ENCODE measurements at regions of chr2 and their contacts with region 1.

Region 1: GRCh38 chr2:199488772-199489400 is 31.1 kb upstream of the SATB2 start:
- DNase-seq: peak; percentile 60
- ATAC-seq: peak; percentile 72
- H3K4me3 ChIP-seq: no peak overlapping the region
- H3K27ac ChIP-seq: no peak overlapping the region
- H3K4me1 ChIP-seq: no peaks in the 10 kb centered on the region; a peak in 1 of 4 replicates
- H3K27me3 ChIP-seq: no peaks in the 10 kb centered on the region
- CTCF ChIP-seq: peak; percentile 68 to 89 (median 89); a peak in 5 of 6 replicates
- POLR2A ChIP-seq: no peak
- RAD21 ChIP-seq: peak; percentile 71

Region 2: DNA sequence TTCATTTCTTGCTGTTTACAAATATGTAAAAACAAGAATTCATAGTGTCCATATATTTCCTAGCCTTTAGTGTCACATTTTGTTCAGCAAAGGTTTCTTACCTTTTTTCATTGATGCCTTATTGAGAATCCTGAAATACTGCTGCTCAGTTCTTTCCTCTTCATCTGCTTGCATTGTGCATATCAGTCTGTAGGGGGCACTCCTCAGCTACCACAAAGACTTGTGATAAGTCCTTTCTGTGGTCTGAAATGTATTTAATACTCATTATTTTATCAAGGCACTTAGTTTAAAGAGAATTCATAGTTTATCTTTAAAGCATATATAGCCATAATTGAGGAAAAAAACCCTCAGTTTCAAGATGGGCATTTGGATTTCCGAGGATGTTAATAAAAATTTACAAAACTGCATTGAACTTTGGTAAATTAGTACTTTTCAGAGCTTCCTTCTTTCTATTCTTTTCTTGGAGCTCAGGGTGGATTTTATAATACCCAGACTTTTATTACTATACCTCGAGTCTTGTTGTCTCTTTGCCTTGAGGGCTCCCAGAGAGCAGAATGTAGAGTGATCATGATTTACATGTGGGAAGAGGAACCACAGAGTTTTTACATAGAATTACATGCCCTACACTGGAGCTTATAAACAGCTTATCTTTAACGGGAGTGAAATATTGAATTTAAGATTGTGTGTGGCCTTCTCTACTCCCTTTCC is 1114.4 kb before region 1 on chr2:
- CTCF ChIA-PET with region 1: interaction called, 9 read pairs
- POLR2A ChIA-PET with region 1: no interaction called
- RAD21 ChIA-PET with region 1: no interaction called
- intact Hi-C with region 1: loop called (anchors 1 kb)
- DNase-seq: no peak
- ATAC-seq: peak; percentile 81
- H3K4me3 ChIP-seq: no peak overlapping the region
- H3K27ac ChIP-seq: no peak overlapping the region
- H3K4me1 ChIP-seq: peaks cover 0 to 8% of the 10 kb centered on the region in 2 experiments; a peak in 1 of 4 replicates
- H3K27me3 ChIP-seq: peaks cover 6% of the 10 kb centered on the region; the same call in 1 of the 2 replicates
- CTCF ChIP-seq: peak; percentile 48 to 93 (median 84); a peak in 5 of 6 replicates
- POLR2A ChIP-seq: no peak
- RAD21 ChIP-seq: peak; percentile 74

Region 3: GRCh38 chr2:198657512-198658121 is 831.3 kb before region 1 on chr2:
- CTCF ChIA-PET with region 1: interaction called, 36 read pairs
- POLR2A ChIA-PET with region 1: no interaction called
- RAD21 ChIA-PET with region 1: no interaction called
- intact Hi-C with region 1: loop called (anchors 1 kb)
- DNase-seq: peak; percentile 28
- ATAC-seq: peak; percentile 53
- H3K4me3 ChIP-seq: no peak overlapping the region
- H3K27ac ChIP-seq: no peak overlapping the region
- H3K4me1 ChIP-seq: no peaks in the 10 kb centered on the region
- H3K27me3 ChIP-seq: no peaks in the 10 kb centered on the region
- CTCF ChIP-seq: peak; percentile 32 to 64 (median 53); a peak in 5 of 6 replicates
- POLR2A ChIP-seq: no peak
- RAD21 ChIP-seq: peak; percentile 56

Region 4: DNA sequence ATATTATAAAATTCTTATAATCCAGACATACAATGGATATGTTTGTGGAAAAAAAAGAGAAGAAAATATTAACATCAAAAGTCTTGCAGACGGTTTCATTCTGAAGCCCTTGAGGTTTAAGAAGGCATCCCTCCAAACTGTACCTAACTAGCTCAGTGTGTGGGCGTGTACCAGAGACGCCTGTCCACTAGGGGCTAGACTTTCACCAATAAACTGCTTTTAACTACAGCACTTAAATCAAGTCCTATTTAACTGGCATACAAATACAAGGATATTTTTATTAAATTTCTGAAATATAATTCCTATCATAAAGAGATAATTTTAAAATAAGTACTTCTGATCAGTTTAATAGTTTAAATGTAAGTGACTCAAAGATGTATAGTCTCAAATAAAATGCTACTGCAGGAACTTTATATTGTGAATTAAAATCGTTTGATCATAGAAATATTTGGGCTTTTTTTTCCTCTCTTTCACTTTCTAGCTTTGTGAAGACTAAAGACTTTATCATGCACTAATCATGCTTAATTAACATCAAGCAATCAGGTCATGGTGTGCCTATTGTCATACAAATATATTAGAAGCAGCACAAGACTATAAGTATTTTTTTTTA is 468.9 kb before region 1 on chr2:
- CTCF ChIA-PET with region 1: no interaction called
- POLR2A ChIA-PET with region 1: no interaction called
- RAD21 ChIA-PET with region 1: interaction called in 1 of 2 experiments, 3 read pairs
- intact Hi-C with region 1: loop called (anchors 2 kb)
- DNase-seq: peak; percentile 21
- ATAC-seq: peak; percentile 84
- H3K4me3 ChIP-seq: no peak overlapping the region
- H3K27ac ChIP-seq: no peak overlapping the region
- H3K4me1 ChIP-seq: no peaks in the 10 kb centered on the region
- H3K27me3 ChIP-seq: no peaks in the 10 kb centered on the region
- CTCF ChIP-seq: peak; percentile 30 to 65 (median 49); a peak in 5 of 6 replicates
- POLR2A ChIP-seq: no peak
- RAD21 ChIP-seq: peak; percentile 54

Region 5: GRCh38 chr2:199405241-199405640 is 83.6 kb before region 1 on chr2:
- CTCF ChIA-PET with region 1: interaction called, 3 read pairs
- POLR2A ChIA-PET with region 1: no interaction called
- RAD21 ChIA-PET with region 1: no interaction called
- intact Hi-C with region 1: loop called (anchors 1 kb)
- DNase-seq: peak; percentile 27
- ATAC-seq: peak; percentile 88
- H3K4me3 ChIP-seq: no peak overlapping the region
- H3K27ac ChIP-seq: no peak overlapping the region
- H3K4me1 ChIP-seq: peaks cover 4 to 11% of the 10 kb centered on the region in 2 experiments; a peak in 3 of 4 replicates
- H3K27me3 ChIP-seq: no peaks in the 10 kb centered on the region
- CTCF ChIP-seq: peak; percentile 38 to 69 (median 50); a peak in 5 of 6 replicates
- POLR2A ChIP-seq: no peak
- RAD21 ChIP-seq: peak; percentile 66

Region 6: GRCh38 chr2:199471443-199472057 is 17.3 kb before region 1 on chr2:
- CTCF ChIA-PET with region 1: interaction called, 17 read pairs
- POLR2A ChIA-PET with region 1: no interaction called
- RAD21 ChIA-PET with region 1: interaction called in 1 of 2 experiments, 4 read pairs
- intact Hi-C with region 1: no loop called
- DNase-seq: no peak
- ATAC-seq: peak; percentile 99
- H3K4me3 ChIP-seq: peak overlapping the region; percentile 25 to 38
- H3K27ac ChIP-seq: no peak overlapping the region
- H3K4me1 ChIP-seq: peaks cover 0 to 10% of the 10 kb centered on the region in 2 experiments; a peak in 2 of 4 replicates
- H3K27me3 ChIP-seq: no peaks in the 10 kb centered on the region
- CTCF ChIP-seq: peak; percentile 75 to 94 (median 78)
- POLR2A ChIP-seq: no peak
- RAD21 ChIP-seq: peak; percentile 53

Region 7: GRCh38 chr2:199596549-199596948 is 107.7 kb after region 1 on chr2:
- CTCF ChIA-PET with region 1: interaction called, 14 read pairs
- POLR2A ChIA-PET with region 1: no interaction called
- RAD21 ChIA-PET with region 1: interaction called in 1 of 2 experiments, 3 read pairs
- intact Hi-C with region 1: no loop called
- DNase-seq: peak; percentile 24
- ATAC-seq: peak; percentile 89
- H3K4me3 ChIP-seq: no peak overlapping the region
- H3K27ac ChIP-seq: no peak overlapping the region
- H3K4me1 ChIP-seq: no peaks in the 10 kb centered on the region
- H3K27me3 ChIP-seq: no peaks in the 10 kb centered on the region
- CTCF ChIP-seq: peak; percentile 26 to 72 (median 72); a peak in 5 of 6 replicates
- POLR2A ChIP-seq: no peak
- RAD21 ChIP-seq: peak; percentile 50

Region 8: GRCh38 chr2:199624946-199625654 is 136.2 kb after region 1 on chr2:
- CTCF ChIA-PET with region 1: no interaction called
- POLR2A ChIA-PET with region 1: no interaction called
- RAD21 ChIA-PET with region 1: no interaction called
- intact Hi-C with region 1: no loop called
- DNase-seq: no peak
- ATAC-seq: peak; percentile 52; the same call in 1 of the 2 replicates
- H3K4me3 ChIP-seq: no peak overlapping the region
- H3K27ac ChIP-seq: no peak overlapping the region
- H3K4me1 ChIP-seq: no peaks in the 10 kb centered on the region
- H3K27me3 ChIP-seq: no peaks in the 10 kb centered on the region
- CTCF ChIP-seq: no peak
- POLR2A ChIP-seq: no peak
- RAD21 ChIP-seq: no peak